ENCODE measurements at regions of chr2 and their contacts with region 1.

Region 1: DNA sequence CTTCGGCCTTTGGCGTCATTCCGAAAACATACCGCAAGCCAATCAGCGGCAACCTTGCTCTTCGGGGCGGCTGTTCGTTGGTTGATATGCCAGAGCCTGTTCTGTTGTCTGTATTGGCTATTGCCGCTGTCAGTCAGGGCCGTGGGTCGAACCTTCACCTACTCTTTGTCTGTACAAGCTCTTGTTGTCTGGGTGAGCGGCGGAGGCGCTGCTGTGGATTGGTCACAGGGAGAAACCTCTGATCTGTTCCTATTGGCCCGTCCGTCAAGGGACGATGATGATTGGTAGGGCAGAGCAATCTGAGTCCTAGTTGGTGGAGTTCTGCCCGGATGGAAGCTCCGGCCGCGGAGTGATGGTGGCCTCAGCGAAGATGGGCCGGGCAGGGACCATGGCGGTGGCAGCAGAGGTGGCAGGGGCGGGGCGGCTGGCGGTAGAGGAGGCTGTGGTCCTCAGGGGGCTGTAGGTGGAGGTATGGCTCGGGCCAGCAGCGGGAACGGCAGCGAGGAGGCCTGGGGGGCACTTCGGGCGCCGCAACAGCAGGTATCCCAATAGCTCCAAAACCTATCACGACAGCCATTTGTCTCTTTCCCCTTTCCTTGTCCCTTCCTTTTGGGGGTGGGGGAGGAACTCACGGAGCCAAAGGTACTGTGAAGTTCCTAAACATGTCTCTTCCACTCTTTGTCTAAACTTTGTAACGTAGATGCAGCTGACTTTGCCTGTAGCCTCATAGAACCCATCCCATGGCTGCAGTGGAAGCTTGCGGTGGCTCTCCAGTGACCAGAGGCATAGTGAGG is at the start of gene WBP1:
- DNase-seq: peak; percentile 99
- ATAC-seq: peak; percentile 80
- H3K4me3 ChIP-seq: peak within 1 kb of the TSS; percentile 100
- H3K27ac ChIP-seq: peak within 1 kb of the TSS; percentile 93
- H3K4me1 ChIP-seq: peaks cover 27% of the 10 kb centered on the region
- H3K27me3 ChIP-seq: no peaks in the 10 kb centered on the region
- CTCF ChIP-seq: no peak
- total RNA-seq, gene WBP1: 57.5 and 64.4 TPM in 2 replicates

Region 2: DNA sequence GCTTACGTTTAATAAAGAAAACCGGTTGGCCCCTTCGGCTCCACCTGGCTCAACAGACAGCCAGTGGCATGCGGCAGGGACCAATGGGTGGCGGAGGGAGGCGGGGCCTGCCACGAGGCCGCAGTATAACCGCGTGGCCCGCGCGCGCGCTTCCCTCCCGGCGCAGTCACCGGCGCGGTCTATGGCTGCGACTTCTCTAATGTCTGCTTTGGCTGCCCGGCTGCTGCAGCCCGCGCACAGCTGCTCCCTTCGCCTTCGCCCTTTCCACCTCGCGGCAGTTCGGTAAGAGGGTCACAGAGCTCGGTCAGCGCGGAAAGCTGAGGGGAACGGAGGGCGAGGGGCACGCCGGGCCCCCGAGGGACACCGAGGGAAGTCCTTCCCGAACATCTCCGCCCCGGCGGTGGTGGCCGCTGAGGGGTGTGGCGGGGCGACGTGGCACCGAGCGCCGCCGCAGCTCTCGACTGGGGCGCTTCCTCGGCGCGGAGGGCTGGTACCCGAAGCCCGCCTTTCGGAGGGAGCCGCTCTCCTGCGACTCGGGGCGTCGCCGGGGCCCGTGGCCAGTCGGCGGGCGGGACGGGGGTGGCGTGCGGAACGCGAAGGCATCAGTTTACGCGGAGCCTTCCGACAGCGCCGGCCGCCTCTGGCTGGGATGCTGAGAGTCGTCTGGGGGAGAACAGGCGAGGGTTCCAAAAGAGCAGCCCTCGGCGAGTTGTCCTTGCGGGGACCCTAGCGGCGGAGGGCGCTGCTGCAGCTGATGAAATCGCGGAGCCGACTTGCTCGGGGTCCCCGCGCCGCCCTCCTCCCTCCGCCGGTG is 259.7 kb before region 1 on chr2 and contains the start of gene MTHFD2:
- CTCF ChIA-PET with region 1: no interaction called
- POLR2A ChIA-PET with region 1: no interaction called
- intact Hi-C with region 1: loop called (anchors 5 kb)
- DNase-seq: peak; percentile 99
- ATAC-seq: peak; percentile 92
- H3K4me3 ChIP-seq: peak within 1 kb of the TSS; percentile 85
- H3K27ac ChIP-seq: peak within 1 kb of the TSS; percentile 78
- H3K4me1 ChIP-seq: peaks cover 26% of the 10 kb centered on the region
- H3K27me3 ChIP-seq: no peaks in the 10 kb centered on the region
- CTCF ChIP-seq: peak; percentile 71
- total RNA-seq, gene MTHFD2: 115 and 118 TPM in 2 replicates

Region 3: GRCh38 chr2:74304332-74305148 is 153.8 kb before region 1 on chr2:
- CTCF ChIA-PET with region 1: no interaction called
- POLR2A ChIA-PET with region 1: no interaction called
- intact Hi-C with region 1: no loop called
- DNase-seq: no peak
- ATAC-seq: no peak
- H3K4me3 ChIP-seq: no peak overlapping the region
- H3K27ac ChIP-seq: no peak overlapping the region
- H3K4me1 ChIP-seq: no peaks in the 10 kb centered on the region
- H3K27me3 ChIP-seq: no peaks in the 10 kb centered on the region
- CTCF ChIP-seq: no peak

Region 4: DNA sequence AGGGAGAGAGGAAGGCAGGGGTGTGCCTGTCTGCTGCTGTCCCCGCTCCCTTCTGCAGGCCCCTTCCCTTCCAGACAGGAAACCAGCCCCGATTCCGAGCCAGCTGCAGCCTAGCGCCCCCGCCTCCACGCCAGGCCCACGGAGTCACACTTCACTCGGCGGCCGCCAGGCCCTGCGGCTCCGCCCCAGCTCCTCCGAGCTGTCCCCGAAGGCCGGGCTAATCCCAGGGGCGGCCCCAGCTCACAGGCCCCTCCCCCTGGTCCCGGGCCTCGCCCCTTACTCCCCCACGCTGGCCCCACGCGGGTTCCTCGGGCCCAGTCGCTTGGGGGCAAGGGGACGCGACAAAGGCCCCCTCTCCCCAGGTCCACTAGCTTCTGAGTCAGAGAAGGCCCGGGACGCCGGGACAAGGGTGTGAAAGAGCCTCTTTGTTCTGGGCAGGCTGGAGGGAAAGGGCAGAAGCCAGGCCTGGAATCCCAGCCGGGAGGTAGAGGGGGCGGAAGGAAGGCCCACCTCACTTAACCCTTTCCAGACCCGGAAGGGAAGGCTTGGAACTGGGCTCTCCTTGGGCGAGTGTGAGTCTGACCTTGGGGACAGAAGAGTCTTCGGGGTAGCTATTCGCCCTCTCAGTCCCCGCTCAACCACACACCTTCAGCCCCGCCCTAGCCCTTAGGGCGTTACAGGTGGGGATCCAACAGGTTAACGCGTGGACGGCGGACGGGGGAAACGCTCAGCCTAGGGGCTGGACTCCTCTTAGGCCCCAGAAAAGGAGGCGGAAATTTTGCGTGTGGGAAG is 17.8 kb before region 1 on chr2:
- CTCF ChIA-PET with region 1: no interaction called
- POLR2A ChIA-PET with region 1: interaction called, 4 read pairs
- intact Hi-C with region 1: loop called (anchors 1 kb)
- DNase-seq: peak; percentile 82
- ATAC-seq: peak; percentile 84
- H3K4me3 ChIP-seq: peak overlapping the region; percentile 73
- H3K27ac ChIP-seq: peak overlapping the region; percentile 85
- H3K4me1 ChIP-seq: peaks cover 34% of the 10 kb centered on the region
- H3K27me3 ChIP-seq: no peaks in the 10 kb centered on the region
- CTCF ChIP-seq: peak; percentile 26; the same call in 1 of the 2 replicates

Region 5: GRCh38 chr2:74507145-74507925 is 49.0 kb after region 1 on chr2 and contains the start of gene PCGF1:
- CTCF ChIA-PET with region 1: no interaction called
- POLR2A ChIA-PET with region 1: no interaction called
- intact Hi-C with region 1: loop called (anchors 2 kb)
- DNase-seq: peak; percentile 99
- ATAC-seq: peak; percentile 93
- H3K4me3 ChIP-seq: peak within 1 kb of the TSS; percentile 95
- H3K27ac ChIP-seq: peak within 1 kb of the TSS; percentile 94
- H3K4me1 ChIP-seq: peaks cover 18% of the 10 kb centered on the region
- H3K27me3 ChIP-seq: no peaks in the 10 kb centered on the region
- CTCF ChIP-seq: 0 out of 2 replicates have a peak, but pooled peaks have one; percentile 17
- total RNA-seq, gene PCGF1: 31.2 and 35.7 TPM in 2 replicates

Region 6: DNA sequence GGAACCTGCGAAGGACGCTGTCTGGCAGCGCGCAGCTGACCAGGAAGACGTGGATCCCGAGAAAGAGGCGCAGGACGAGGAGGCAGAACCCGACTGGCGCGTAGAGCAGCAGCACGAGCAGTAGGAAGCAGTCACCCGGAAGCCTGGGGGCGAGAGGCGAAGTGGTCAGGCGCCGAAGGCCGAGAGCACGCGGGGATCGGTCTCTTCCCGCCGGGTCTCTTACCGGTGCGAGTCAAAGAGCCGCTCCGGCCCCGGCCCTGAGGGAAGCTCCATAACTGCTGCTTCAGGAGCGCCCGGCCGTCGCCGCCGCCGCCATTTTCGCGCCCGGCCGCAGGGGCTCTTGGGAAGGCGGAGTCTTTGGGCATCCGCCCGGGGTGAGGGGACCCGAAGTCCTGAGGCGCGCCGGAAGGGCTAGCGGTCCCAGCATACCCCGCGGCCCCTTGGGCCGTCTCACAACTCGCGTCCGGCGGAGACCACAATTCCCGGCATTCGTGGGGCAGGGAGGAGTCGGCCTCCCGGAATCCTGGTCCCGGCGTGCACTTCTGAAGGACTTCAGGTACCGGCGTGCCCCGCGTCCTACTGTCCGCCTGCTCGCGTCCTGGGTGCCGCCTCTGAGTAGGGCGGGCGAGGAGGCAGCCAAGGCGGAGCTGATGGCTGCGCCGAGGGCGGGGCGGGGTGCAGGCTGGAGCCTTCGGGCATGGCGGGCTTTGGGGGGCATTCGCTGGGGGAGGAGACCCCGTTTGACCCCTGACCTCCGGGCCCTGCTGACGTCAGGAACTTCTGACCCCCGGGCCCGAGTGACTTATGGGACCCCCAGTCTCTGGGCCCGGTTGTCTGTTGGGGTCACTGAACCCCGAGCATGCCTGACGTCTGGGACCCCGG is 71.3 kb after region 1 on chr2 and contains the starts of genes AUP1 and HTRA2:
- CTCF ChIA-PET with region 1: no interaction called
- POLR2A ChIA-PET with region 1: no interaction called
- intact Hi-C with region 1: loop called (anchors 1 kb)
- DNase-seq: peak; percentile 99
- ATAC-seq: peak; percentile 93
- H3K4me3 ChIP-seq: peak within 1 kb of the TSS; percentile 93
- H3K27ac ChIP-seq: peak within 1 kb of the TSS; percentile 63
- H3K4me1 ChIP-seq: peaks cover 20% of the 10 kb centered on the region
- H3K27me3 ChIP-seq: no peaks in the 10 kb centered on the region
- CTCF ChIP-seq: no peak
- total RNA-seq, gene AUP1: 218 and 233 TPM in 2 replicates
- total RNA-seq, gene HTRA2: 71.8 and 77.5 TPM in 2 replicates

Measured in PC-3 (cell line).